Endothelial cell of umbilical vein (primary cell): ENCODE measurements at regions of chr3 and their contacts with region 1.

Region 1: GRCh38 chr3:128095222-128095703 is 28.3 kb downstream of the RUVBL1 start:
- DNase-seq: peak; percentile 83
- H3K4me3 ChIP-seq: no peak overlapping the region
- H3K27ac ChIP-seq: peak overlapping the region; percentile 30
- H3K4me1 ChIP-seq: peaks cover 15% of the 10 kb centered on the region
- H3K27me3 ChIP-seq: no peaks in the 10 kb centered on the region
- CTCF ChIP-seq: peak; percentile 89 to 92
- POLR2A ChIP-seq: no peak

Region 2: DNA sequence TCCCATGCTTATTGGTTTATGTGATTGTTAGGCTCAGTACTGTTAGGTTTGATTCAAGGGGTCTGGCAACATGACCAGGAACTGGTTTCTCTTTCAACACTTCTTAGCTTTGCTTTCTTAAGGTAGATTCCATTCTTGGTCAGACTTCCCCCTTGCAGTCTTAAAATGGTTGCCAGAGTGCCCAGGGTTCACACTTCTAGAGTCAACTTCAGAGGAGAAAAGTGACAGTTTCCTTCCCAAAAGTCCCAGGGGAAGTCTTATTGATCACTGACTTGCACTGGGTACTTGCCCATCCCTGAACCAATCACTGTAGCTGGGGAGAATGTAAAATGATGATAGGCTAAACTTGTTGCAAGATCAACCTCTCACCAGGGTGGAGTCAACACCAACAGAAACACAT is 287.1 kb before region 1 on chr3:
- CTCF ChIA-PET with region 1: no interaction called
- POLR2A ChIA-PET with region 1: no interaction called
- dilution Hi-C with region 1: no loop called
- intact Hi-C with region 1: no loop called
- DNase-seq: no peak
- H3K4me3 ChIP-seq: no peak overlapping the region
- H3K27ac ChIP-seq: no peak overlapping the region
- H3K4me1 ChIP-seq: peaks cover 22% of the 10 kb centered on the region
- H3K27me3 ChIP-seq: no peaks in the 10 kb centered on the region
- CTCF ChIP-seq: no peak
- POLR2A ChIP-seq: no peak

Region 3: GRCh38 chr3:128075516-128076482 is 19.5 kb before region 1 on chr3:
- CTCF ChIA-PET with region 1: interaction called, 21 read pairs
- POLR2A ChIA-PET with region 1: no interaction called
- dilution Hi-C with region 1: no loop called
- intact Hi-C with region 1: loop called (anchors 1 kb)
- DNase-seq: peak; percentile 94
- H3K4me3 ChIP-seq: peak overlapping the region in 2 of 3 experiments; percentile 16 to 44
- H3K27ac ChIP-seq: peak overlapping the region; percentile 33
- H3K4me1 ChIP-seq: peaks cover 51% of the 10 kb centered on the region
- H3K27me3 ChIP-seq: no peaks in the 10 kb centered on the region
- CTCF ChIP-seq: peak; percentile 95 to 98
- POLR2A ChIP-seq: peak; percentile 55

Region 4: DNA sequence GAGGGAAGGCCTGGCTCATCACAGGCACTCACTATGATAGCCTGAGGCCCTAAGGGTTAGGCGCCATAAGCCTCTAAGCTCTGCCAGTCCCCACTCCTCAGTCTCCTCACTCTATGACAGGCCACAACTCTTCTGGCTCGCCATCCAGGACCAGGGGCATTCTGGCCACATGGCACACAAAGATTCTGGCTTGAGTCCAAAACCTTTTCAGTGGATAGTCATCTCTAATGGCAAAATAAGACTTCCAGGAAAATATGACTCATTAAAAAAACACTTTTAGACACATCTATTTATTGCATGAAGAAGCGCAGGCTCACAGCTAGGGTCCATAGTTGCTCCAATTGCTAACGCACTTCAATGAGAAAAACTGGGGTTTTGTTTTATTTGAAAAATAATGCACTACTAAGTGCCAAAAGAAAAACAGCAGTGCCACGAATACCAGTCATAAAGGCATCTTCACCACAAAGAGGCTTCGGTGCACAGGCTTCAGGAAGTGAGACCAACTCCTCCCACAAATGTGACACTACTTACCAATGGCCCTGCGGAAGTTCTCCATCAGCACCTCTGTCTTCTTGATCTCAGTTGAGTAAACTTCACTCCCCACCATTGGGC is 17.2 kb after region 1 on chr3:
- CTCF ChIA-PET with region 1: interaction called, 14 read pairs
- POLR2A ChIA-PET with region 1: no interaction called
- dilution Hi-C with region 1: no loop called
- intact Hi-C with region 1: no loop called
- DNase-seq: peak; percentile 89
- H3K4me3 ChIP-seq: no peak overlapping the region
- H3K27ac ChIP-seq: peak overlapping the region; percentile 36
- H3K4me1 ChIP-seq: peaks cover 14% of the 10 kb centered on the region
- H3K27me3 ChIP-seq: no peaks in the 10 kb centered on the region
- CTCF ChIP-seq: no peak
- POLR2A ChIP-seq: no peak

Region 5: DNA sequence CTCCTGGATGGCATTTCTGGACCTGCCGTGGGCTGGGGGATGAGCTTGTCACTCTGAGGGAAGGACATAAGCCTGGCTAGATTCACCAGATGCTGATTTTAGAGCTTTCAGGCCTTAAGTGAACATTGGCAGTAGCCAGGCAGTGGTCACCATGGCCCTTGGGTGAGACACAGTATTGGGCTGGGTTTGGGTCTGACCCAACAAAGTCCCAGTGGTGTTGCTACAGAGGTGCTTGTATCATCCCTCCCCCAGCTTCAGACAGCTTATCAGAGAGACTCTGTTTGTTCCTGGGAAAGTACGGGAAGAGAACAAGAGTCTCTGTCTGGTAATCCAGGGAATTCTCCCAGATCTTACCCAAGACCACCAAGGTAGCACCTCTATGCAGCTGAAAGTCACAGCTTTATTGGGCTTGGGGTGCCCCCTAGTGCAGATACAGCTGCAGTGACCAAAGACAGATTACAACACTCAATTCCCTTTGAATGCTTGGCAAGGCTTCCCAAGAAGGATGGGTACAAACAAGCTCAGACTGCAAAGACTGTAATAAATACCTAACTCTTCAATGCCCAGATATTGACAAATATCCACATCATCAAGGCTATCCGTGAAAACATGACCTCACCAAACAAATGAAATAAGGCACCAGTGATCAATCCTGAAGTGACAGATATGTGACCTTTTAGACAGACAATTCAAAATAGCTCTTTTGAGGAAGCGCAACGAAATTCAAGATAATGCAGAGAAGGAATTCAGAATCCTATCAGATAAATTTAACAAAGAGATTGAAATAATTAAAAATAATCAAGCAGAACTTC is 38.2 kb after region 1 on chr3:
- CTCF ChIA-PET with region 1: interaction called, 273 read pairs
- POLR2A ChIA-PET with region 1: interaction called, 4 read pairs
- dilution Hi-C with region 1: no loop called
- intact Hi-C with region 1: loop called (anchors 1 kb)
- DNase-seq: peak; percentile 76
- H3K4me3 ChIP-seq: no peak overlapping the region
- H3K27ac ChIP-seq: no peak overlapping the region
- H3K4me1 ChIP-seq: no peaks in the 10 kb centered on the region
- H3K27me3 ChIP-seq: peaks cover 16 to 19% of the 10 kb centered on the region in 2 experiments
- CTCF ChIP-seq: peak; percentile 67 to 78
- POLR2A ChIP-seq: no peak

Region 6: GRCh38 chr3:128322066-128323022 is 227.1 kb after region 1 on chr3:
- CTCF ChIA-PET with region 1: interaction called, 16 read pairs
- POLR2A ChIA-PET with region 1: no interaction called
- dilution Hi-C with region 1: no loop called
- intact Hi-C with region 1: loop called (anchors 10 kb)
- DNase-seq: peak; percentile 42
- H3K4me3 ChIP-seq: no peak overlapping the region
- H3K27ac ChIP-seq: no peak overlapping the region
- H3K4me1 ChIP-seq: no peaks in the 10 kb centered on the region
- H3K27me3 ChIP-seq: no peaks in the 10 kb centered on the region
- CTCF ChIP-seq: peak; percentile 59 to 75
- POLR2A ChIP-seq: no peak